CD8-positive, alpha-beta T cell (primary cell): ENCODE measurements at regions of chr3 and their contacts with region 1.

Region 1: GRCh38 chr3:113690482-113690881 is 6.0 kb downstream of the USF3 start:
- DNase-seq: no peak
- ATAC-seq: no peak
- H3K4me3 ChIP-seq: no peak overlapping the region
- H3K4me3 Mint-ChIP-seq: no peak overlapping the region
- H3K27ac ChIP-seq: no peak overlapping the region
- H3K27ac Mint-ChIP-seq: no peak overlapping the region
- H3K4me1 ChIP-seq: peaks cover 26% of the 10 kb centered on the region
- H3K4me1 Mint-ChIP-seq: peaks cover 32% of the 10 kb centered on the region
- H3K27me3 ChIP-seq: no peaks in the 10 kb centered on the region
- H3K27me3 Mint-ChIP-seq: no peaks in the 10 kb centered on the region
- CTCF ChIP-seq: no peak

Region 2: GRCh38 chr3:113947372-113948014 is 257.0 kb after region 1 on chr3 and contains the start of gene ZDHHC23:
- CTCF ChIA-PET with region 1: no interaction called
- POLR2A ChIA-PET with region 1: no interaction called
- intact Hi-C with region 1: loop called in 1 of 2 experiments (anchors 5 kb)
- DNase-seq: peak; percentile 21 to 88 (median 63)
- ATAC-seq: peak; percentile 87
- H3K4me3 ChIP-seq: peak within 1 kb of the TSS; percentile 74 to 85
- H3K4me3 Mint-ChIP-seq: peak within 1 kb of the TSS; percentile 86
- H3K27ac ChIP-seq: no peak within 1 kb of the TSS
- H3K27ac Mint-ChIP-seq: peak within 1 kb of the TSS; percentile 84
- H3K4me1 ChIP-seq: peaks cover 8% of the 10 kb centered on the region
- H3K4me1 Mint-ChIP-seq: peaks cover 10% of the 10 kb centered on the region
- H3K27me3 ChIP-seq: no peaks in the 10 kb centered on the region
- H3K27me3 Mint-ChIP-seq: peaks cover 21% of the 10 kb centered on the region
- CTCF ChIP-seq: no peak
- total RNA-seq, gene ZDHHC23: 2.1 to 4.7 TPM